GM10248 (cell line): ENCODE measurements at regions of chr3 and their contacts with region 1.

Region 1: GRCh38 chr3:22089284-22089683 is 338.3 kb upstream of the ZNF385D start:
- DNase-seq: peak; percentile 18
- CTCF ChIP-seq: peak; percentile 65

Region 2: GRCh38 chr3:22117751-22118346 is 28.6 kb after region 1 on chr3:
- CTCF ChIA-PET with region 1: interaction called, 22 read pairs
- POLR2A ChIA-PET with region 1: no interaction called
- DNase-seq: no peak
- CTCF ChIP-seq: peak; percentile 54

Region 3: DNA sequence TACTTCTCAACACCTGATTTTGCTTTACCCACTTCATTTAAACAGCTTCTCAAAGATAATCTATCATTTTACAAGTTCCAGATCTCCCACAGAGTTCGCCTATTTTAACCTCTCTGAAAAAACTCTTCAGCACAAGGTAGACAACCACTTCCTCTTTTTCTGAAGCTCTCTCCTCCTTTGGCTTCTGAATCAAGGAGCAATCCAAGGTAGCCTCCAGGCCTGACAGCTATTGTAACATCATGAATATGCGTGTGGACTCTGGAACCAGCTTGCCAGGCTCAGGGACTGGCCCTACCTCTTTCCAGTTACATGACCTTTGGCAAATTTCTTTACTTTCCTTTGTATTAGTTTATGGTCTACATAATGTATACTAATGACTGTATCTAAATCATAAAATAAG is 67.6 kb after region 1 on chr3:
- CTCF ChIA-PET with region 1: no interaction called
- POLR2A ChIA-PET with region 1: no interaction called
- DNase-seq: no peak
- CTCF ChIP-seq: no peak